ENCODE measurements at regions of chr3 and their contacts with region 1.

Region 1: DNA sequence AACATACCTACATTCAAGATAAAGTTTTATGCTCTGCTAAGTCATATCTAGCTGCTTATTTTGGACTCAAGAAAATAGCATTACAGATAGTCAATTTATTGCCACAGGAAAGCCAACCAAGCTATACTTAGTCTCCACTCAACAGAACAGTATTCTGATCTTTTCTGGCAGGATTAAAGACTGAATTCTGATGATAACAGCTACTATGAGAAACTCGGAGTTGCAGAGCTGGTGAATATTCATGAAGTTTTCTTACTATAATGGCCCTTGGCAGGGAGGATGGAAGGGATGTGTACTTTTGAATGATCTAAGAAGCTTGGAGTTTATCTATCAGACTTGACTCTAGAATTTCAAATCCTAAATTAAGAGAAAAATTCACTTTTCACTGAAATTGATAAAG is 237.7 kb downstream of the CTNNB1 start:
- DNase-seq: no peak
- H3K4me3 ChIP-seq: no peak overlapping the region
- H3K27ac ChIP-seq: no peak overlapping the region
- H3K4me1 ChIP-seq: peaks cover 0 to 3% (median 0%) of the 10 kb centered on the region in 4 experiments; a peak in 1 of 7 replicates
- H3K27me3 ChIP-seq: no peaks in the 10 kb centered on the region
- CTCF ChIP-seq: no peak
- EP300 ChIP-seq: no peak
- POLR2A ChIP-seq: no peak
- RAD21 ChIP-seq: no peak

Region 2: GRCh38 chr3:41448398-41448797 is 11.4 kb after region 1 on chr3:
- CTCF ChIA-PET with region 1: interaction called, 15 read pairs
- POLR2A ChIA-PET with region 1: no interaction called
- DNase-seq: no peak
- H3K4me3 ChIP-seq: no peak overlapping the region
- H3K27ac ChIP-seq: no peak overlapping the region
- H3K4me1 ChIP-seq: no peaks in the 10 kb centered on the region
- H3K27me3 ChIP-seq: no peaks in the 10 kb centered on the region
- CTCF ChIP-seq: peak in 2 of 3 experiments; percentile 22 to 42; a peak in 3 of 4 replicates
- EP300 ChIP-seq: no peak
- POLR2A ChIP-seq: no peak
- RAD21 ChIP-seq: peak; percentile 31 to 51

Region 3: DNA sequence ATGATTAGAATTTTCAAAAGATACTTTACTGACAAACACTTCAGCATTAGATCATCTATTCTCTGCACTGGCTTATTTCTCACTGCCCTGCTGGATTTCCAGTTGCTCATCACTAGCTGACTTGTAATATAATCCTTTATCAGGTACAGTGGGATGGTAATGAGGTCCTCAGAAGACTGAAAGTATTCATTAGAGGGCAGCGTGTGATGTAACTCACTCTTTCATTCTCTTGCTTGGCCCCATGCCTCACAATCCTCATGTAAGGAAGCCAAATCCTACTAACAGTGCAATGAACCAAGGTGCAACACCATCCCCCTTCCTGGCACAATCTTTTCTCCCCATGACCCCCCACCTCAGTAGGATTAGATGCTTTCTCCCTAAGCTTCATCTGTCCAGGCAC is 52.2 kb after region 1 on chr3:
- CTCF ChIA-PET with region 1: no interaction called
- POLR2A ChIA-PET with region 1: no interaction called
- DNase-seq: no peak
- H3K4me3 ChIP-seq: no peak overlapping the region
- H3K27ac ChIP-seq: no peak overlapping the region
- H3K4me1 ChIP-seq: peaks cover 0 to 4% (median 0%) of the 10 kb centered on the region in 4 experiments; a peak in 2 of 7 replicates
- H3K27me3 ChIP-seq: no peaks in the 10 kb centered on the region
- CTCF ChIP-seq: no peak
- EP300 ChIP-seq: no peak
- POLR2A ChIP-seq: no peak
- RAD21 ChIP-seq: no peak

Measured in H1 (cell line).